ENCODE measurements at regions of chr7 and their contacts with region 1.

Region 1: DNA sequence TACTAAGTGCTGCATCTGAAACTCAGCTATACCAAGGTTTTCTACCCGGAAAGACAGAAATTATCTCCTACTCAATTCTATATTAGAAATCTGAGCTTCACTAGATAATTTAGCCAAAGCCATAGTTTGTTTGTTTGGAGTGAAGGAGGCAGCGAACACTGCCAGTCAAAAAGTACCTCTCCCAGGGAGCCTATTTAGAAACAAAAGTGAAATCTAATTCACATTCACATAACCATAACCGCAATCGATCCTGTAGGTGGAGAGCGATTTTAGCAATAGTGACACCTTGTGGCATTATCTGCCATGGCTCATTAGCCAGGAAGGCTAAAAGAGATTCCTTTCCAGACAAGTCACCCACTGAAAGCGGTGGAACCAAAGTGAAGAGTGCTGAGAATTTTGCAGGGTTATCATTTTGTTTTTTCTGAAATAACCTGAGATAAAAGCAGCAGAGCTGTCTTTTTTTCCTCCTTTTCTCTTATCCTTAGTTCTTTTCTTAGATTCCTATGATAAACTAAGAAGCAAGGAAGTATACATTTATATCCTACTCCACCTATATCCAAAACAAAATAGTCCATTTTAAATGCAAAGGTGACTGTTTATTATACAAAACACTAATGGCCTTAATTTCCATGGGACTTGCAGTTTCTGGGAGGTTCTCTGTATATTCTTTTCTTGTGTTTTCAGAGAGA is 83.7 kb upstream of the BET1 start:
- DNase-seq: peak; percentile 70
- ATAC-seq: peak; percentile 97
- H3K4me3 Mint-ChIP-seq: peak overlapping the region; percentile 56
- H3K27ac Mint-ChIP-seq: no peak overlapping the region
- H3K4me1 Mint-ChIP-seq: peaks cover 4% of the 10 kb centered on the region
- H3K27me3 Mint-ChIP-seq: peaks cover 22% of the 10 kb centered on the region

Region 2: GRCh38 chr7:93902777-93903423 is 184.9 kb before region 1 on chr7:
- CTCF ChIA-PET with region 1: interaction called, 10 read pairs
- POLR2A ChIA-PET with region 1: no interaction called
- DNase-seq: peak; percentile 24
- ATAC-seq: no peak
- H3K4me3 Mint-ChIP-seq: no peak overlapping the region
- H3K27ac Mint-ChIP-seq: no peak overlapping the region
- H3K4me1 Mint-ChIP-seq: no peaks in the 10 kb centered on the region
- H3K27me3 Mint-ChIP-seq: peaks cover 6% of the 10 kb centered on the region

Region 3: GRCh38 chr7:94067047-94067446 is 20.8 kb before region 1 on chr7:
- CTCF ChIA-PET with region 1: no interaction called
- POLR2A ChIA-PET with region 1: no interaction called
- DNase-seq: no peak
- ATAC-seq: no peak
- H3K4me3 Mint-ChIP-seq: no peak overlapping the region
- H3K27ac Mint-ChIP-seq: no peak overlapping the region
- H3K4me1 Mint-ChIP-seq: peaks cover 11% of the 10 kb centered on the region
- H3K27me3 Mint-ChIP-seq: peaks cover 44% of the 10 kb centered on the region

Measured in activated CD8-positive, alpha-beta T cell treated with anti-CD3 and anti-CD28 coated beads, Interleukin-2, amount 10 ng/mL, durations not matched to agents 7 days and 5 days (primary cell).